MCF 10A (cell line): ENCODE measurements at regions of chr17 and their contacts with region 1.

Region 1: GRCh38 chr17:50169121-50169764 is 3.4 kb downstream of the SGCA start:
- DNase-seq: peak; percentile 68
- H3K4me3 Mint-ChIP-seq: no peak overlapping the region
- H3K27ac Mint-ChIP-seq: no peak overlapping the region
- H3K4me1 Mint-ChIP-seq: peaks cover 21% of the 10 kb centered on the region
- H3K27me3 Mint-ChIP-seq: no peaks in the 10 kb centered on the region
- CTCF ChIP-seq: peak; percentile 69

Region 2: GRCh38 chr17:50189550-50190292 is 20.5 kb after region 1 on chr17:
- CTCF ChIA-PET with region 1: interaction called, 17 read pairs
- POLR2A ChIA-PET with region 1: no interaction called
- intact Hi-C with region 1: no loop called
- DNase-seq: no peak
- H3K4me3 Mint-ChIP-seq: no peak overlapping the region
- H3K27ac Mint-ChIP-seq: no peak overlapping the region
- H3K4me1 Mint-ChIP-seq: peaks cover 2% of the 10 kb centered on the region
- H3K27me3 Mint-ChIP-seq: no peaks in the 10 kb centered on the region
- CTCF ChIP-seq: no peak

Region 3: DNA sequence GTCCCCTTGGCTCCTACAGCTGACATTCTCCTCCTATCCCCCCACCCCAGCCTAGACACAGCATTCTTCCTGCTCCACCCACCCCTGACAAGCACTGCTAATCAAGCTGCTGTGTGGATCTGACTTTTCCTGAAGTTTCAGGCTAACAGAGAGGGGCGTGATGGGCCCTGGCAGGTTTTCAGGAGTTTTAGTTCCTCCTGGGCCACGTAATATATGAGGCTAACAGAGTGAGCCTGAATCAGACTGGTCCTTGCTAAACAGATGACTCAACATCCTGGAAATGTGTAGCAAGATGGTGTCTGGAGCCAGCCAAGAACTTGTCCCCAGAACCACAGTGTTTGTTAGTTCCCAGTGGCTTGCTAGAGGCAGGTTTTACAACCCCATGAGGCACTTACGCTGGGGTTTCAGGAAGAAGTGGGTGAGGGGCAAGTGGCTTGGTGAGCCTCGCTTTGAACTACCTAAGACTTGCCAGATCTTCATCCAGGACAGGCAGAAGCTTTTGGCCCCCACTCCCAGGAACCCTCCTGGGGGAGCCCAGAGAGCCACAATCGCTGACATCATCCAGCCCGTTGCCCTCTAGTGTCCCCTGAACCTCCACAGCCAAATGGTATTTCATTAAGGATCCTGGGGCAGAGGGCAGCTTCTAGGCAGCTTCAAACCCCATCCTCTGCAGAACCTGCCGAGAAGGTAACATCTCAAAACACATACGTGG is 120.9 kb after region 1 on chr17:
- CTCF ChIA-PET with region 1: interaction called, 47 read pairs
- POLR2A ChIA-PET with region 1: interaction called, 3 read pairs
- intact Hi-C with region 1: no loop called
- DNase-seq: peak; percentile 98
- H3K4me3 Mint-ChIP-seq: peak overlapping the region; percentile 72
- H3K27ac Mint-ChIP-seq: peak overlapping the region; percentile 89
- H3K4me1 Mint-ChIP-seq: peaks cover 28% of the 10 kb centered on the region
- H3K27me3 Mint-ChIP-seq: no peaks in the 10 kb centered on the region
- CTCF ChIP-seq: no peak